MCF 10A (cell line): ENCODE measurements at regions of chr7 and their contacts with region 1.

Region 1: DNA sequence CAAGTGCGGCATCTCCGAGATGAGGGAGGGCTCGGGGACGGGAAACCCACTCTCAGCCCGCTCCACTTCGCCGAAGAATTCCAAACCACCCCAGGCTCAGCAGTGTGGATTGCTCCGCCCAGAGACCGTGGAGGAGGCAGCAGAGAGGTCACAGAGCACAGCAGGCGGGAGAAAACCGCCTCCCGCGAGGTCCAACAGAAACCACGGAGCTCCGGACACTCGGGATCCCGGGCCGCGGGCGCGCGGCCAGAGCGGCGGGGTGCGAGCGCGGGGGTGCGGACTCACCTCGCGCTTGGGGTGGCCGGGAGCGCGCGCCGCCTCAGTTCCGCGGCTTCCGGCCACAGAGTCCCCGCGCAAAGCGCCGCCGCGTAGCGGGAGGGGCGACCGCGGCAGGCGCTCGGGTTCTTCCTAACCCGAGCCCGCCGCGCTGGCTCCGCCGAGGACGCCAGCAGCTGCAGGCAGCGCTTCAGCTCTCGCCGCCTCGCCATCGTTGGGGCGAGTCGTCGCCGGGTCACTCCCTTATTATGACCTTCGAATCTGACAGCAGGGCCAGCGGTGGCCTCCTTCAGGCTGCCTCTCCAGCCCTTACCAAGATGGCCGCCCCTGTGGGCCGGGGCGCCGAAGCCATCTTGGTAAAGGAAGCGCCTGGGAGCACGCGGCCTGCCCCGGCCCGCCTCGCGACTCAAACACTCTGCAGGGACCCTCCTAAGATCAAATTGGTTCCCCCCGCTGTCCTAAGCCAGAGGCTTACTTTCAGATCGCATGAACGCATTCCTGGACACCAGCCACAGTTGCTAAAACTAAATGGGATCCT is at the start of gene NAPEPLD:
- DNase-seq: peak; percentile 82
- H3K4me3 Mint-ChIP-seq: peak within 1 kb of the TSS; percentile 92
- H3K27ac Mint-ChIP-seq: peak within 1 kb of the TSS; percentile 93
- H3K4me1 Mint-ChIP-seq: peaks cover 7% of the 10 kb centered on the region
- H3K27me3 Mint-ChIP-seq: no peaks in the 10 kb centered on the region
- CTCF ChIP-seq: no peak
- total RNA-seq, gene NAPEPLD: 5.8 and 6.1 TPM in 2 replicates

Region 2: DNA sequence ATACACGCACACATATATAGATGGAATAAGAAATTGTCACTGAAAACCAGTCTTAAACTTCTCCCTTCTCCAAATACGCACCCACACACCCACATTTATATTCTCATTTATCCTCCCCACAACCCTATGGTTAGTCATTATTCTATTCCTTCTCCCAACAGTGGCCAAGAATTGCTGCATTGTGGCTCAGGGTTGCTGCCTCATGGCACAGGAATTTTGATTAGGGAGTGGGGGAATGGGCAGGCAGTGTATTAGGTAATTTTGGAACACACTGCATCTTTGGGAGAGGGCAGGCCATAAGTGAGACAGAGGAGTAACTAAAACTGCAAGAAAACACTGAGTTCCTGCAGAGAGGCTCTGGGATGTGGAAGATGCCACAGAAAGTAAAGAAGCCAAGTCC is 36.0 kb before region 1 on chr7:
- CTCF ChIA-PET with region 1: no interaction called
- POLR2A ChIA-PET with region 1: no interaction called
- intact Hi-C with region 1: loop called (anchors 1 kb)
- DNase-seq: peak; percentile 93
- H3K4me3 Mint-ChIP-seq: peak overlapping the region; percentile 20
- H3K27ac Mint-ChIP-seq: peak overlapping the region; percentile 63
- H3K4me1 Mint-ChIP-seq: peaks cover 14% of the 10 kb centered on the region
- H3K27me3 Mint-ChIP-seq: no peaks in the 10 kb centered on the region
- CTCF ChIP-seq: no peak

Region 3: GRCh38 chr7:103292122-103292521 is 142.9 kb after region 1 on chr7:
- CTCF ChIA-PET with region 1: no interaction called
- POLR2A ChIA-PET with region 1: no interaction called
- intact Hi-C with region 1: loop called (anchors 10 kb)
- DNase-seq: no peak
- H3K4me3 Mint-ChIP-seq: no peak overlapping the region
- H3K27ac Mint-ChIP-seq: no peak overlapping the region
- H3K4me1 Mint-ChIP-seq: no peaks in the 10 kb centered on the region
- H3K27me3 Mint-ChIP-seq: peaks cover 31% of the 10 kb centered on the region
- CTCF ChIP-seq: no peak